Panc1 (cell line): ENCODE measurements at regions of chr10 and their contacts with region 1.

Region 1: DNA sequence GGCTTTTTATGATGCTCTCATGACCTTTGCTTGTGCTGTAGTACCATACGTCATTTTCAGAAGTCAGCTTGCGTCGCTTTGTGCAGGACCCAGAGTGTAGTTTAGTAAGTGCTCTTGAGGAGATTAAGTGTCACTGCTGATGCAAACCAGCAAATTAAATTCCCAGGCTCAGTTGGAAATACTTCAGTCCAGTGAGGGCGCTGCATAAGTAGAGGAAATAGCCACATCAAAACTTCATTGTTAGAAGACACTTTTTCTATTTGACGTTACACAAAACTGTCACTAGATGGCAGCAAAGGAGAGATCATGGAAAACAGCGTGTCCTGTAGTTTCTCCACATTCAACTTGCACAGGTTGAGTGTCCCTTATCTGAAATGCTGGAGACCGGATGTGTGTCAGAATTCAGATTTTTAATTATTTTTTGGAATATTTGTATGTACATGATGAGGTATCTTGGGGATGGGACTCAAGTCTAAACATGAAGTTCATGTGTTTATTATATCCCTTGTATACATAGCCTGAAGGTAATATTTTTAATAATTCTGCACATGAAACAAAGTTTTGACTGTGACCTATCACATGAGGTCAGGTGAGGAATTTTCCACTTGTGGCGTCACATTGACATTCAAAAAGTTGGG is 7.9 kb downstream of the ZNF22 start:
- DNase-seq: peak; percentile 82
- ATAC-seq: peak; percentile 95
- H3K4me3 ChIP-seq: no peak overlapping the region
- H3K27ac ChIP-seq: no peak overlapping the region
- H3K4me1 ChIP-seq: no peaks in the 10 kb centered on the region
- H3K27me3 ChIP-seq: no peaks in the 10 kb centered on the region
- CTCF ChIP-seq: peak; percentile 89

Region 2: DNA sequence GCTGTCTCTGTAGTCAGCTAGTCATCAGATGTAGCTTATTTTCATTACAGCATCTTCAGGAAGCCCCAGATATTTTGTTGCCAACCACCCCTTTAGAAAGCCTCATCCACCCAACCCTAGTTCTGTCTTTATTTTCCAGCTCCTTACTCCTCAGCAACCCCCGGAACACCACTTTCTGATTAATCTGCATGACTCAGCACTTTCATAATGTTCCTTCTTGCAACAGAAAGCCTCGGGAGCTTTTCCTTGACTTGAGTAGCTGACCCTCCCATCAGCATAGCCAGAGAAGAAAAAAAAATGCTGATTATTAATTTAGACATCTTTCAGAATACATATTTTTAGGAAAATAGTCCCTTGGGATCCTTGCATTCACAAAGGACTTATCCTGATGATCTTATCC is 379.7 kb before region 1 on chr10:
- CTCF ChIA-PET with region 1: no interaction called
- POLR2A ChIA-PET with region 1: no interaction called
- in situ Hi-C with region 1: no loop called
- intact Hi-C with region 1: no loop called
- DNase-seq: no peak
- ATAC-seq: no peak
- H3K4me3 ChIP-seq: no peak overlapping the region
- H3K27ac ChIP-seq: no peak overlapping the region
- H3K4me1 ChIP-seq: no peaks in the 10 kb centered on the region
- H3K27me3 ChIP-seq: no peaks in the 10 kb centered on the region
- CTCF ChIP-seq: no peak

Region 3: DNA sequence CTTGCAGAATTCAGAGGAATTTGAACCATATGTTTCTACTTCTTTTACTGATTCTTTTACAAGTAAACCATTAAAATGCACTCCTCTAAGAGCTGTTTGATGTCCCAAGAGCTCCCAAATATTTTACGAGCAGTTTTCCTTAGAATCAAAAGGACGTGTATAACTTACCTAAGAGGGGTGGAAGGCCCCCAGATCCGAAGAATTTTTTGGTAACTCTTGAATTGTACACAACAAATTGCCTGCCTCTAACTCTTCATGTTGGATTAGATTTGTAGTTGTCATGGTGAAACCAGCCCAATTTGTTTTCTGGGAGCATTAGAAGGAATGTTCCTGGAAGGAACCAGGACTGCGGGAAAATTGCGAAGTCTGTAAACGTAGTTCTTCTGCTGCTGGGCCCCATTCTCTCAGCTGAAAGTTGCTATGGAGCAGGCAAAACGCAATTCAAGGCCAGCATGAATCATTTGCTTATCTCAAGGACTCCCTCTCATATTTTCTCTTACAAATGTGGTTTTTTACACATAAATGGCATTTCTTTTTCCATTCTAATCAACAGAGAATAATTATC is 222.3 kb before region 1 on chr10:
- CTCF ChIA-PET with region 1: no interaction called
- POLR2A ChIA-PET with region 1: no interaction called
- in situ Hi-C with region 1: no loop called
- intact Hi-C with region 1: no loop called
- DNase-seq: no peak
- ATAC-seq: no peak
- H3K4me3 ChIP-seq: no peak overlapping the region
- H3K27ac ChIP-seq: no peak overlapping the region
- H3K4me1 ChIP-seq: no peaks in the 10 kb centered on the region
- H3K27me3 ChIP-seq: no peaks in the 10 kb centered on the region
- CTCF ChIP-seq: no peak

Region 4: DNA sequence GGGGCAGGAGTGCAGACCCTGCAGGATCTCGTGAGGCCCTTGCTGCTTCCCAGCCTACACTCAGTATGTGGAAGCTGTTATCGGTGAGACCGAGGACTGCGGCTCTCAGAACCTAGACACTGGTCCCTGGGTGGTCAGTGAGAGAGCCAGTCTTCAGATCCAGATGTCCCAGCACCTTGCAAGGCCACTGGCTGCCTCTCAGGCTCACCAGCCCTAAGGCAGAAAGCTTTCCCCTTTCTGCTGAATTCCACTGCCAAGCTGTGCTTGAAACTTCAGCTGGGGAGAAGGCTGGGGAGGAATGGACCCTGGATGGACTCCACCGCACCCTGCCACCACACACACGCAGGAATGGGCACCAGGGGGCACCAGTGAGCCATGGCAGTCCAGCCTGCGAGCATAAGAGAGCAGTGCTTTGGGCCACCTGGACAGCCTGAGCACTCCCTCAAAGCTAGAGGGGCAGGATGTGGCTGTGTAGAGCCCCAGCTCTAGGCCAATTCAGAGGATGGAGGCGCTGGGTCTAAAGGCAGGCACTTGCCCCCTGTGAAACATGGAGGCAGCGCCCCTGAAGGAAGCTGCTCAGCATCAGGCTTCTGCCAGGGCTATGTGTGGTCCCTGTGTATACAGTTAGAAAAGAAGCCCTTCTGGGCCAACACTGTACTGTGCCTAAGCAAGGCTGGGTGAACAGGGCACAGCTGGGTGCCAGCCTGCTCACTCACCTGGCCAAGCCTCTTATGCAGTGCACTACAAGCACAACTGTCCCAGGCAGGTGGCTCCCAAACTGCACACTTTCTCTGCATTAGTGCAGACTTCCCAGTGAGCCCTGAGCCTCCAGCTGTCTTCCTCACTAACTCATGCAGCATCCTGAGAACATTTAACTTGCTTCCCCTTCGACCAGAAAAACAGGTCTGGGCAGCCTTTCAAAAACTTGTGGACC is 75.9 kb before region 1 on chr10:
- CTCF ChIA-PET with region 1: interaction called, 3 read pairs
- POLR2A ChIA-PET with region 1: no interaction called
- in situ Hi-C with region 1: no loop called
- intact Hi-C with region 1: loop called (anchors 5 kb)
- DNase-seq: peak; percentile 61
- ATAC-seq: peak; percentile 98
- H3K4me3 ChIP-seq: no peak overlapping the region
- H3K27ac ChIP-seq: peak overlapping the region; percentile 19; the same call in 1 of the 2 replicates
- H3K4me1 ChIP-seq: 0 out of 2 replicates have a peak, but pooled peaks cover 3% of the 10 kb centered on the region
- H3K27me3 ChIP-seq: no peaks in the 10 kb centered on the region
- CTCF ChIP-seq: peak; percentile 100

Region 5: GRCh38 chr10:45235798-45236231 is 227.2 kb after region 1 on chr10:
- CTCF ChIA-PET with region 1: no interaction called
- POLR2A ChIA-PET with region 1: interaction called, 7 read pairs
- in situ Hi-C with region 1: no loop called
- intact Hi-C with region 1: loop called (anchors 5 kb)
- DNase-seq: no peak
- ATAC-seq: peak; percentile 73
- H3K4me3 ChIP-seq: peak overlapping the region in 1 of 2 experiments; percentile 0; a peak in 1 of 4 replicates
- H3K27ac ChIP-seq: no peak overlapping the region
- H3K4me1 ChIP-seq: no peaks in the 10 kb centered on the region
- H3K27me3 ChIP-seq: peaks cover 3% of the 10 kb centered on the region; the same call in 1 of the 2 replicates
- CTCF ChIP-seq: no peak

Region 6: DNA sequence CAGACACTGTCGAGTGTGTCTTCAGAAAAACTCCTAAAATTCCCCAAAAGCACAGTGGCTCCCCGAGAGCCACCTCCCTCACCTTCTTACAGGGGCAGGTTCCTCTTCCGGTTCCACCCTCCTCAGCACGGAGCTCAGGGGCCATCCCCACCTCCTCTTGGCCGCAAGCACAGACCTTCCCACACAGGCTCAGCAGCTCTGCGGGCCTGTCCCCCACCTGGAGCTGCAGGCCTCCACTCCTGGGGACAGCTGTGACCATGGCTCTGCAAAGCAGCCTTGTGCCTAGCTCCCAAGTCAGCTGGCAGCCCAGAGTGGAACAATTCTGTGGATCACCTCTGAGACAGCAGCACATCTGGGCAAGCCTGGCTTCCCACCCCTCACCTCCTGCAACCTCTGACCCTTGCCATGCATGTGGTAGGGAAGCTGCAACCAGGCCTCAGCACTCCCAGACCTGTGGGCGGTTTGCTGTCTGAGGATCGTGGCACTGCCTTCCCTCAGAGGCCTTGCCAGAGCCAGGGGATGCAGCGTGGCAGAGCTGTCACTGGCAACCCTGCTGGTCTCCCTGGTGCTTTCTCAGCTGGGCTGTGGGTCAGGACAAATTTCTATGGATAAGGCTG is 445.1 kb after region 1 on chr10:
- CTCF ChIA-PET with region 1: no interaction called
- POLR2A ChIA-PET with region 1: no interaction called
- in situ Hi-C with region 1: no loop called
- intact Hi-C with region 1: loop called (anchors 10 kb)
- DNase-seq: no peak
- ATAC-seq: 0 out of 2 replicates have a peak, but pooled peaks have one; percentile 43
- H3K4me3 ChIP-seq: no peak overlapping the region
- H3K27ac ChIP-seq: no peak overlapping the region
- H3K4me1 ChIP-seq: no peaks in the 10 kb centered on the region
- H3K27me3 ChIP-seq: no peaks in the 10 kb centered on the region
- CTCF ChIP-seq: no peak